Endothelial cell of umbilical vein (primary cell): ENCODE measurements at regions of chr21 and their contacts with region 1.

Region 1: DNA sequence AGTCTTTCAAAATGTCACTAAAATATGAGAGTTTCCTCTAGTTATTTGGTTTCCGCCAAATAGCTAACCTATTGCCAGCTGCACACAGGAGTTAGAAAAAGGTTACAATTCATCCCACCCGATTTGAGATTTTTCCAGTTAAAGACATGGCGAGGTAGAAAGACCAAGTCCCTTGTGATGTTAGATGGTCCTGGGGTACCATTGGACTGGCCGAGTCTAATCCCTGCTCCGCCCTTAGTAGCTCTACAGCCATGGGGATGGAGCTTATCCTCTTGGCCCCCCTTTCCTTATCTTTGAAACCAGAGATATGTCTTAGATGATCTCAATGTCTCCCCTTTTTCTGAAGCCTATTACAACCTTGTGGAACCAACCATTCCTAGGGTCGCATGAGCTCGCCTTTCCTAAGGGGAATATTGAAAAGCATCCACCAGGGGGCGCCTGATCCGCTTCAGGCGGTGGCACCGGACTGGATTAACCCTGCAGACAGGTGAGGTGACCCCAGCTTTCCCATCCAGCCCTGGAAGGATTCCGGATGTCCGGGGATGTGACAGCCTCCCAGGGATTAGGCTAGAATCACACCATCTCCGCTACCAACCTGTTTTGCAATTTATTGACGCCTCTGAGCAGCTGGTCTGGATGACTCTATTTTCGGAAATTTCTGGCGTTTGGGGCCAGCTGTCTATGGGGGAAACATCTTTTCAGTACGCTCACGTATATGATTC is 68.3 kb upstream of the SIM2 start:
- DNase-seq: peak; percentile 36
- H3K4me3 ChIP-seq: no peak overlapping the region
- H3K27ac ChIP-seq: no peak overlapping the region
- H3K4me1 ChIP-seq: no peaks in the 10 kb centered on the region
- H3K27me3 ChIP-seq: peaks cover 12 to 13% of the 10 kb centered on the region in 2 experiments
- CTCF ChIP-seq: peak; percentile 73 to 76
- POLR2A ChIP-seq: no peak

Region 2: GRCh38 chr21:35575280-35575915 is 1055.2 kb before region 1 on chr21:
- CTCF ChIA-PET with region 1: no interaction called
- POLR2A ChIA-PET with region 1: no interaction called
- dilution Hi-C with region 1: no loop called
- intact Hi-C with region 1: no loop called
- DNase-seq: no peak
- H3K4me3 ChIP-seq: no peak overlapping the region
- H3K27ac ChIP-seq: no peak overlapping the region
- H3K4me1 ChIP-seq: no peaks in the 10 kb centered on the region
- H3K27me3 ChIP-seq: peaks cover 8 to 39% of the 10 kb centered on the region in 2 experiments
- CTCF ChIP-seq: no peak
- POLR2A ChIP-seq: no peak

Region 3: GRCh38 chr21:36589355-36589971 is 41.2 kb before region 1 on chr21:
- CTCF ChIA-PET with region 1: interaction called, 15 read pairs
- POLR2A ChIA-PET with region 1: no interaction called
- dilution Hi-C with region 1: no loop called
- intact Hi-C with region 1: no loop called
- DNase-seq: peak; percentile 36
- H3K4me3 ChIP-seq: no peak overlapping the region
- H3K27ac ChIP-seq: no peak overlapping the region
- H3K4me1 ChIP-seq: no peaks in the 10 kb centered on the region
- H3K27me3 ChIP-seq: no peaks in the 10 kb centered on the region
- CTCF ChIP-seq: peak; percentile 55 to 69
- POLR2A ChIP-seq: no peak

Region 4: DNA sequence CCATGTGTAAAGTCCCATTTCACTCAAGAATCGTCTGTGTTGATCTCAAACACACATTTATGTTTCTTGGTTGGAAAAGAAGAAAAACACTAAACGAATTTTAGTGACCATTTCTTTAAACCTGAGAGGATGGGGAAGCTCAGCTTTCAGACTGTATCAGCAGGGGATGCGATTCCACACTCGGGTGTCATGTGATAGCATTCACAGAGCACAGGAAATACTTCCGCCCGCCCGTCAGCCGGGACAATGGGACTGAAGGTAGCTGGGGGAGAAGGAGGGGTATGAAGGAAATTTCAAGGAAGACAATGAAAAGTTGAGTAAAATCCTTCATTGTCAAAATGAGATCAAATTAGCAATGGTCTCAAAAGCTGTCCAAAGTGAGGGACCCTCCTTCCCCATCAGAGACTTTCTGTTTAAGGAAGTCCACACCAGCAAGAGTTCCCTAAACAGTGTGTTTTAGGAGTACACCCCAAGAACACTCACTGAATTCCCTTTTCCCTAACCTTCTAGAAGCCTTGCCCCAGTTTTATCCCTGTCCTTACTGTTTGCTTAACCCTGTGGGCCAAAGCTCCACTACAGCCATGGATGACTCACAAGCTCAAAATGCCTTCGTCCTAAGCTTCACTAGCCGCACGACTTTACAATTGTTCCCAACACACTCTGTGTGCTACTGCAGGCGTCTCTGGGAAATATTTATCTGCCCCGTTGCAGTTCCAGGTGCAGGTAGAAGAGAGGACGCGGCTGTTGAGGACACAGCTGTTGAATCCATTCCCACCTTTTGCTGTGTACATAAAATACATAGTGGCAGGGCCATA is 16.8 kb after region 1 on chr21:
- CTCF ChIA-PET with region 1: interaction called, 38 read pairs
- POLR2A ChIA-PET with region 1: interaction called, 4 read pairs
- dilution Hi-C with region 1: no loop called
- intact Hi-C with region 1: no loop called
- DNase-seq: peak; percentile 65
- H3K4me3 ChIP-seq: no peak overlapping the region
- H3K27ac ChIP-seq: peak overlapping the region; percentile 77
- H3K4me1 ChIP-seq: peaks cover 20% of the 10 kb centered on the region
- H3K27me3 ChIP-seq: no peaks in the 10 kb centered on the region
- CTCF ChIP-seq: no peak
- POLR2A ChIP-seq: no peak

Region 5: GRCh38 chr21:36692835-36693488 is 62.3 kb after region 1 on chr21:
- CTCF ChIA-PET with region 1: interaction called, 17 read pairs
- POLR2A ChIA-PET with region 1: no interaction called
- dilution Hi-C with region 1: no loop called
- intact Hi-C with region 1: no loop called
- DNase-seq: no peak
- H3K4me3 ChIP-seq: no peak overlapping the region
- H3K27ac ChIP-seq: no peak overlapping the region
- H3K4me1 ChIP-seq: peaks cover 4% of the 10 kb centered on the region
- H3K27me3 ChIP-seq: peaks cover 87 to 97% of the 10 kb centered on the region in 2 experiments
- CTCF ChIP-seq: peak; percentile 23 to 29
- POLR2A ChIP-seq: no peak

Region 6: GRCh38 chr21:36759348-36760083 is 128.9 kb after region 1 on chr21:
- CTCF ChIA-PET with region 1: interaction called, 11 read pairs
- POLR2A ChIA-PET with region 1: no interaction called
- dilution Hi-C with region 1: no loop called
- intact Hi-C with region 1: no loop called
- DNase-seq: no peak
- H3K4me3 ChIP-seq: no peak overlapping the region
- H3K27ac ChIP-seq: no peak overlapping the region
- H3K4me1 ChIP-seq: no peaks in the 10 kb centered on the region
- H3K27me3 ChIP-seq: no peaks in the 10 kb centered on the region
- CTCF ChIP-seq: no peak
- POLR2A ChIP-seq: no peak

Region 7: GRCh38 chr21:36934864-36935420 is 304.3 kb after region 1 on chr21:
- CTCF ChIA-PET with region 1: interaction called, 102 read pairs
- POLR2A ChIA-PET with region 1: no interaction called
- dilution Hi-C with region 1: no loop called
- intact Hi-C with region 1: no loop called
- DNase-seq: no peak
- H3K4me3 ChIP-seq: no peak overlapping the region
- H3K27ac ChIP-seq: no peak overlapping the region
- H3K4me1 ChIP-seq: no peaks in the 10 kb centered on the region
- H3K27me3 ChIP-seq: no peaks in the 10 kb centered on the region
- CTCF ChIP-seq: no peak
- POLR2A ChIP-seq: no peak